Gastrocnemius medialis (tissue), 4 donors: ENCODE measurements at regions of chr6 and their contacts with region 1.

Region 1: GRCh38 chr6:72740135-72740534 is 118.3 kb downstream of the KCNQ5 start:
- DNase-seq: no peak
- ATAC-seq: no peak
- H3K4me3 ChIP-seq: no peak overlapping the region
- H3K27ac ChIP-seq: peak overlapping the region in 3 of 4 donors; percentile 11 to 86 (median 78)
- H3K4me1 ChIP-seq: peaks cover 27 to 35% of the 10 kb centered on the region in 2 donors
- H3K27me3 ChIP-seq: no peaks in the 10 kb centered on the region
- CTCF ChIP-seq: no peak
- POLR2A ChIP-seq: no peak

Region 2: DNA sequence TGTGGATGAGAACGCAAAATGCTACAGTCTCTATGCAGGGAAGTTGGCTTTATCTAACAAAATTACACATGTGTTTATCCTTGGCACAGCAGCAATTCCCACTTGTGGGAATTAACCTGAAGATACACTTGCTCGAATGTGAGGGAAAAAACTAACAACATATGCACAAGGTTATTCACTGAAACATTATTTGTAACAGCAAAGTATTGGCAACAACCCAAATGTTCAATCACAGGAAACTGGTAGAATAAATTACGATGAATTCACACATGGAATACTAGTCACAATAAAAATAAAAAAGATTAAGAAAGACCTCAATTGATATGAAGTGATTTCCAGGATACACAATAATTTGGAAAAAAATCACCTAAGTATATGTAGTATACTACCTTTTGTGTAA is 1519.7 kb before region 1 on chr6:
- in situ Hi-C with region 1: no loop called
- intact Hi-C with region 1: no loop called
- DNase-seq: no peak
- ATAC-seq: no peak
- H3K4me3 ChIP-seq: no peak overlapping the region
- H3K27ac ChIP-seq: no peak overlapping the region
- H3K4me1 ChIP-seq: no peaks in the 10 kb centered on the region
- H3K27me3 ChIP-seq: no peaks in the 10 kb centered on the region
- CTCF ChIP-seq: no peak
- POLR2A ChIP-seq: no peak

Region 3: DNA sequence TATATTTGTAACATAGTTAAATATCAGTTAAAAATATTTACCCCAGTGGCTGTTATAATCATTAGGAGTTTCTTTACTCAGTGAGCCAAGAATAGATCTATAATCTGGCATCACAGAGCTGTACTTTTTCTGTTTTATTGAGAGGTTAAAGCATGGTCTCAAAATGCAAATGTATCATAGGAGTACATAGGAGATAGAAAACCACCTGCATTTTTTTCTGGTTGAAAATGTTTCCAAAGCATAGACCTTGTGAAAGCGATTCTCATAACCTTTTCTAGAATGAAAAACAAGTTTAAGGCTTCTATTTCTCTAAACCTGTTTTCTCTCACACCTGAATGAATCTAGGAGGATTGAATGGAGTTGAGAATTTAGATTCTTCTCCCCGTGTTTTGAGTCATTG is 103.9 kb before region 1 on chr6:
- in situ Hi-C with region 1: no loop called
- intact Hi-C with region 1: no loop called
- DNase-seq: no peak
- ATAC-seq: no peak
- H3K4me3 ChIP-seq: no peak overlapping the region
- H3K27ac ChIP-seq: no peak overlapping the region
- H3K4me1 ChIP-seq: peaks cover 0 to 13% of the 10 kb centered on the region in 2 donors
- H3K27me3 ChIP-seq: no peaks in the 10 kb centered on the region
- CTCF ChIP-seq: no peak
- POLR2A ChIP-seq: no peak

Region 4: DNA sequence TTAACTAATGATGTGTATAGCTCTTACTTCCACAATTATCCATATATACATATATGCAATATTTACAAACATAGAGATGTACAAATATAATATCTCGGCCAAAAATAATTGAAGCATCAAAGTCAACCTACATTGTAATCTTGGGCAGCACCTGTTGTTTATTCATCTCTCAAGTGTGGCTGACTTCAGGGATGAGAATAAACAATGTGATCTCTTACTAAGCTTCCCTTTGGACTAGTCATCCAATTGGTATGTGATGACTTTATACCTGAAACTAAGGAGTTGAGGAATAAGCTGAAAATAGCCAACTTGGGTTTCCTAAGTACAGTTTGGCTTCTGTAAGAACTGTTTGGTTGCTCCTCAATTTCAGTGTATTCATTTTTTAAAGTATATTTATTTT is 228.6 kb after region 1 on chr6:
- in situ Hi-C with region 1: no loop called
- intact Hi-C with region 1: loop called (anchors 5 kb)
- DNase-seq: no peak
- ATAC-seq: peak; percentile 97 to 99
- H3K4me3 ChIP-seq: no peak overlapping the region
- H3K27ac ChIP-seq: no peak overlapping the region
- H3K4me1 ChIP-seq: peaks cover 4 to 11% of the 10 kb centered on the region in 2 donors
- H3K27me3 ChIP-seq: no peaks in the 10 kb centered on the region
- CTCF ChIP-seq: no peak
- POLR2A ChIP-seq: no peak